Endothelial cell of umbilical vein (primary cell): ENCODE measurements at regions of chr9 and their contacts with region 1.

Region 1: GRCh38 chr9:83334320-83334719 is 203.9 kb downstream of the FRMD3 start:
- DNase-seq: peak; percentile 74
- H3K4me3 ChIP-seq: no peak overlapping the region
- H3K27ac ChIP-seq: no peak overlapping the region
- H3K4me1 ChIP-seq: peaks cover 3% of the 10 kb centered on the region
- H3K27me3 ChIP-seq: no peaks in the 10 kb centered on the region
- CTCF ChIP-seq: peak; percentile 79 to 90
- POLR2A ChIP-seq: no peak

Region 2: GRCh38 chr9:83266666-83267496 is 67.4 kb before region 1 on chr9:
- CTCF ChIA-PET with region 1: interaction called, 10 read pairs
- POLR2A ChIA-PET with region 1: no interaction called
- dilution Hi-C with region 1: no loop called
- intact Hi-C with region 1: loop called (anchors 2 kb)
- DNase-seq: peak; percentile 67
- H3K4me3 ChIP-seq: peak overlapping the region in 1 of 3 experiments; percentile 60
- H3K27ac ChIP-seq: peak overlapping the region; percentile 79
- H3K4me1 ChIP-seq: peaks cover 72% of the 10 kb centered on the region
- H3K27me3 ChIP-seq: no peaks in the 10 kb centered on the region
- CTCF ChIP-seq: no peak
- POLR2A ChIP-seq: peak; percentile 61

Region 3: GRCh38 chr9:83304686-83305085 is 29.6 kb before region 1 on chr9:
- CTCF ChIA-PET with region 1: interaction called, 19 read pairs
- POLR2A ChIA-PET with region 1: no interaction called
- dilution Hi-C with region 1: no loop called
- intact Hi-C with region 1: no loop called
- DNase-seq: peak; percentile 38
- H3K4me3 ChIP-seq: no peak overlapping the region
- H3K27ac ChIP-seq: no peak overlapping the region
- H3K4me1 ChIP-seq: peaks cover 4% of the 10 kb centered on the region
- H3K27me3 ChIP-seq: no peaks in the 10 kb centered on the region
- CTCF ChIP-seq: no peak
- POLR2A ChIP-seq: no peak

Region 4: GRCh38 chr9:83432104-83432639 is 97.9 kb after region 1 on chr9:
- CTCF ChIA-PET with region 1: interaction called, 10 read pairs
- POLR2A ChIA-PET with region 1: no interaction called
- dilution Hi-C with region 1: no loop called
- intact Hi-C with region 1: no loop called
- DNase-seq: peak; percentile 60
- H3K4me3 ChIP-seq: no peak overlapping the region
- H3K27ac ChIP-seq: no peak overlapping the region
- H3K4me1 ChIP-seq: peaks cover 10% of the 10 kb centered on the region
- H3K27me3 ChIP-seq: no peaks in the 10 kb centered on the region
- CTCF ChIP-seq: no peak
- POLR2A ChIP-seq: no peak

Region 5: DNA sequence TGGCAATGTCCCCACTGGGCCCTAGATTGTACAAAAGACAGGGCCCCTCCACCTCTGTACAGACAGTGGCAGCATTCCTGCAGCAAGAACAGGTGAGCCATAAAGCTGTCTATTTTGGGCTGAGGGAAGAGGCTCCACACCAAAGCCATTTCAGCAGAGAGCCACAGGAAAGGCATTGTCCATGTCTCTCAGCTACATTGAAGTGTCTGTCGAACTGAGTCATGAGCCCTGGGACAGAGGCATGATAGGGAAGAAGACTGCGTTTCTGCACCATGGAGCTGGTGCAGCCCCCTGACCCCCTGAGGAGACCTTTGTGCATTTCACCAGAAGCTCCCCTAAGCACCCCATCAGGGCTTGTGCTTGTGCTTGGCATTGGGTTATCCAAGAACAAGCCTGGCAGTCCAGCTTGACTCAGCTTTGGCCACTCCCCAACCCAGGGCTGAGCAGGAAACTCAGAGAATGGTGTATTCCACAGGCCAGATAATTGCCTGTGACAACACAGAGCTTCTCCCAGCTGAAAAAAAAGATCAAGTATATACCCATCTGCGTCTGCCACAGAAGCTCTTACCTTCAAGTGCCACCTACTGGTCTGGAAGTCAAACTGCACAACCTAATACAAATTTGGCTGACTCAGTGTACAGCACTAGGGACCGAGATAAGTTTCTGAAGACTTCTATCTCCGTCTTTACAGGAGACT is 209.8 kb after region 1 on chr9:
- CTCF ChIA-PET with region 1: interaction called, 280 read pairs
- POLR2A ChIA-PET with region 1: no interaction called
- dilution Hi-C with region 1: no loop called
- intact Hi-C with region 1: loop called (anchors 1 kb)
- DNase-seq: peak; percentile 65
- H3K4me3 ChIP-seq: no peak overlapping the region
- H3K27ac ChIP-seq: no peak overlapping the region
- H3K4me1 ChIP-seq: no peaks in the 10 kb centered on the region
- H3K27me3 ChIP-seq: peaks cover 2% of the 10 kb centered on the region in 2 experiments
- CTCF ChIP-seq: peak; percentile 70 to 75
- POLR2A ChIP-seq: no peak